Mucosa of descending colon (tissue), 3 donors: ENCODE measurements at regions of chr20 and their contacts with region 1.

Region 1: GRCh38 chr20:815914-816606 is 17.5 kb upstream of the FAM110A start:
- DNase-seq: peak in 2 of 3 donors; percentile 54 to 56
- ATAC-seq: peak; percentile 75
- H3K4me3 ChIP-seq: no peak overlapping the region
- H3K4me1 ChIP-seq: no peaks in the 10 kb centered on the region
- CTCF ChIP-seq: peak; percentile 97

Region 2: GRCh38 chr20:709423-709822 is 106.6 kb before region 1 on chr20:
- intact Hi-C with region 1: no loop called
- DNase-seq: peak in 1 of 3 donors; percentile 25
- ATAC-seq: no peak
- H3K4me3 ChIP-seq: no peak overlapping the region
- H3K4me1 ChIP-seq: no peaks in the 10 kb centered on the region
- CTCF ChIP-seq: no peak

Region 3: GRCh38 chr20:956330-956951 is 140.4 kb after region 1 on chr20:
- intact Hi-C with region 1: loop called (anchors 5 kb)
- DNase-seq: peak; percentile 57 to 77 (median 73)
- ATAC-seq: peak; percentile 83
- H3K4me3 ChIP-seq: no peak overlapping the region
- H3K4me1 ChIP-seq: no peaks in the 10 kb centered on the region
- CTCF ChIP-seq: peak; percentile 89

Region 4: GRCh38 chr20:1212607-1213396 is 396.7 kb after region 1 on chr20:
- intact Hi-C with region 1: loop called in 1 of 2 experiments (anchors 2 kb)
- DNase-seq: peak in 2 of 3 donors; percentile 68 to 83
- ATAC-seq: peak; percentile 97
- H3K4me3 ChIP-seq: no peak overlapping the region
- H3K4me1 ChIP-seq: no peaks in the 10 kb centered on the region
- CTCF ChIP-seq: peak; percentile 69